ENCODE measurements at regions of chr12 and their contacts with region 1.

Region 1: DNA sequence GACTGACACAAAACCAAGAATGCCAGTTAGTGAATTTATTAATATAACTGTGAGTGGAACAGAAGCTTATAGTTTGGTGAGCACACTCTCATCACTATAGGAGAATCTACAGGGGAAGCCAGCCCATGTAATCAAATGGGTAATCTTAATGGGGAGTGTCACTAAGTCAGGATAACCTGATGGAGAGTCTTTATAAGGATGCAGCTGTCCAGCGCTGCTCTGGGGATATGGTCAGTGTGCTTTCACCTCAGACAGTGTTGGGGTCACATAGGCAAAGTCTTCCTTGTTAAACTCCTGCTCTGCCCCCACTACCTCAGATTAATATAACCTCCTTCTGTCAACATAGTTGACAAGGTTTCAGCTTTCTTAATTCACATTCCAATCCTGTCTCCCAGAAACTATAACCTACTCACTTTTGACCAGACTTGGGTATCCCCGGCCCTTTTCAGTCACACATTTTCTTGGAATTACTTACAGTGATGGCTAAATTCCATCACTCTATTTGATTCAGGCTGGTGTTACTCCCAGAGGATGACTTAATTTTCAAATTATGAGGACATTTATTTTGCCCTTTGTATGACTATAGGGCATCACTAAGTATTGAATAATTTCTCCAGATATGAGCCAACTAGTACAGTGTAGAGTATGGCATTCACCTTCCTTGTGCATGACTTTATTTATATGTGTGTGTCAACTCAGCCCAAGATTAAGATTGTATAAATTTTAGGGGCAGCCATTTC is 13.2 kb downstream of the STK38L start:
- DNase-seq: no peak
- ATAC-seq: peak in 3 of 8 donors; percentile 22 to 51 (median 48)
- H3K4me3 ChIP-seq: no peak overlapping the region
- H3K27ac ChIP-seq: no peak overlapping the region
- H3K4me1 ChIP-seq: peaks cover 0 to 87% (median 62%) of the 10 kb centered on the region in 9 donors
- H3K27me3 ChIP-seq: no peaks in the 10 kb centered on the region
- CTCF ChIP-seq: no peak

Region 2: DNA sequence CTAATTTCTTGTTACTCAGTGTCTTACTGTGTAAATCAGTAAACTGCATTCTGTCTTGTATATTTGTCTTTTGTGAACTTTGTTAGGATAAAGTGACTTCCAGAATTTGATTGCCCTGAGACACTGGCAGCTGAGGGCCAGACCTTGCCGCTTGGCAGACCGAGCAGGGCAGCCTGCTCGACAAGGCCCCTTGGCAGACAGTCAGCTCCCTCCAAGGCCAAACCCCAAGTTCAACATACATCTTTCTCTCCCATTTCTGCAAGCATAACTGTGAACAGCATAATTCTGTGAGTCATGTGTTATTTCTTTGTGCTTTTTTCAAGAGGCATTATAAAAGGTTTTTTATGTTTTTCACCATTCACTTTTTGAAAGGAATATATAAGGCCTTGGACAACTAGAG is 36.2 kb after region 1 on chr12:
- intact Hi-C with region 1: loop called in 2 of 10 experiments (anchors 5 kb)
- DNase-seq: peak in 1 of 2 donors; percentile 42
- ATAC-seq: peak in 4 of 8 donors; percentile 30 to 71 (median 68)
- H3K4me3 ChIP-seq: no peak overlapping the region
- H3K27ac ChIP-seq: peak overlapping the region in 8 of 10 donors; percentile 11 to 87 (median 66)
- H3K4me1 ChIP-seq: peaks cover 0 to 100% (median 85%) of the 10 kb centered on the region in 9 donors
- H3K27me3 ChIP-seq: no peaks in the 10 kb centered on the region
- CTCF ChIP-seq: no peak

Measured in heart right ventricle (tissue), 16 donors.